Activated CD4-positive, alpha-beta memory T cell treated with anti-CD3 and anti-CD28 coated beads, Interleukin-2, amount 10 ng/mL, durations not matched to agents 7 days and 5 days (primary cell): ENCODE measurements at regions of chr10 and their contacts with region 1.

Region 1: GRCh38 chr10:103888113-103888841 is 29.7 kb downstream of the STN1 start:
- DNase-seq: no peak
- H3K4me3 Mint-ChIP-seq: no peak overlapping the region
- H3K27ac Mint-ChIP-seq: peak overlapping the region; percentile 54
- H3K4me1 Mint-ChIP-seq: peaks cover 47% of the 10 kb centered on the region
- H3K27me3 Mint-ChIP-seq: no peaks in the 10 kb centered on the region

Region 2: DNA sequence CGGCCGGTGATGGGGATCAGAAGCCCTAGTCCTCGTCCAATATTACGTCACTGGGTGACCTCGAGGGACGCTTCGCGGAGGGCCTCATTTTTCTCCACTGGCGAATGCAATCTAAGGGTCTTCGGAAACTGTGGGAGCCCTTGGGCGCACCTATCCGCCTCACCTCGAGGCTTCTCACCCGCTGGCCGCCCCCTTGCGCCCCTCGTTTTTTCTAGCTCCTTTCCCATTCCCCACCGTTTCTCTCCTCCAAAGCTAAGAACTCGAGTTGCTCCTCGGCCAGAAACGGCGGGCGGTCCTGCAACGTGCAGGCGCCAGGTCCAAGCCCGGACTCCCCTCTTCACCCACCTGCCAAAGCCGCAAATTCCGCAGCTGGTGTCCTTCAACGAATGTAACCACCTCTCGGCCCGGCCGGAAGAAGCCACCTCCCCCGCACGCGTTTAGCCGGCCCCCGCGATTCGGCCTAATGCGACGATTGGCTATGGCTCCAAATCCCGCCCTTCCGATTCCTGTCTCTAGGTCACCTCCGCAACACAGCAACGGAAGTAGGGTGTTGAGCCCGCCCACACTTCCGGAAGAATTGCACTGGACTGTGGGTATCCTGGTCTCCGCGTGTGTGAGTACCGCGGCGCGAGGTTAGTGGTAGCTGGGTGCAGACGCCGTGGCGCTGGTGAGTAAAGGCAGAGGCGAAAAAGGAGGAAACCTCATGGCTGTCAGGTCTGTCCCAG is 492.1 kb before region 1 on chr10 and contains the starts of genes ATP5MK and PDCD11:
- CTCF ChIA-PET with region 1: no interaction called
- POLR2A ChIA-PET with region 1: no interaction called
- DNase-seq: peak; percentile 97
- H3K4me3 Mint-ChIP-seq: peak within 1 kb of the TSS; percentile 92
- H3K27ac Mint-ChIP-seq: peak within 1 kb of the TSS; percentile 83
- H3K4me1 Mint-ChIP-seq: peaks cover 54% of the 10 kb centered on the region
- H3K27me3 Mint-ChIP-seq: no peaks in the 10 kb centered on the region
- total RNA-seq, gene ATP5MK: 299 to 315 TPM
- total RNA-seq, gene PDCD11: 38.9 to 39.6 TPM

Region 3: GRCh38 chr10:103911021-103911459 is 22.8 kb after region 1 on chr10:
- CTCF ChIA-PET with region 1: interaction called, 30 read pairs
- POLR2A ChIA-PET with region 1: interaction called, 104 read pairs
- DNase-seq: peak; percentile 69
- H3K4me3 Mint-ChIP-seq: peak overlapping the region; percentile 65
- H3K27ac Mint-ChIP-seq: peak overlapping the region; percentile 98
- H3K4me1 Mint-ChIP-seq: peaks cover 76% of the 10 kb centered on the region
- H3K27me3 Mint-ChIP-seq: no peaks in the 10 kb centered on the region

Region 4: GRCh38 chr10:103918053-103918846 is 30.0 kb after region 1 on chr10 and contains the start of gene STN1:
- CTCF ChIA-PET with region 1: interaction called, 15 read pairs
- POLR2A ChIA-PET with region 1: interaction called, 104 read pairs
- DNase-seq: peak; percentile 97
- H3K4me3 Mint-ChIP-seq: peak within 1 kb of the TSS; percentile 91
- H3K27ac Mint-ChIP-seq: peak within 1 kb of the TSS; percentile 93
- H3K4me1 Mint-ChIP-seq: peaks cover 37% of the 10 kb centered on the region
- H3K27me3 Mint-ChIP-seq: no peaks in the 10 kb centered on the region
- total RNA-seq, gene STN1: 55.1 to 56.8 TPM

Region 5: DNA sequence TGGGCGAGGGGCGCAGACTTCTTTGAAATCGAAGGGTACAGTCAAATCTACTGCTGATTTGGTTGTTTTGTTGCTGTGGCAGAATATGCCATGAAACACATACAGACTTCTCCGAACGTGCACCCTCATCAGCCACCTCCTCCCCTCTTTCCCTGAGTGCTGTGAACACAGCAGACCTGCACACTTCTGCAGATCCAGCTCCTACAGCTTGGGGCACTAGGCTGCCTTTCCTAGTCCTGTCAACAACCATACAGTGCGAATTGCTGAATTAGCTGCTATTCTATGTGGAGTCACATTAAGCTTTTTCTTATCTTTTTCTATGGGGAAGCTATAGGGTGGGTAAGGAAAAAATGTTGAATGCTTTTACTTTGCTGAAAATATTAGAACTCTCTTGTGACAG is 139.9 kb after region 1 on chr10:
- CTCF ChIA-PET with region 1: interaction called, 10 read pairs
- POLR2A ChIA-PET with region 1: no interaction called
- DNase-seq: no peak
- H3K4me3 Mint-ChIP-seq: no peak overlapping the region
- H3K27ac Mint-ChIP-seq: no peak overlapping the region
- H3K4me1 Mint-ChIP-seq: peaks cover 4% of the 10 kb centered on the region
- H3K27me3 Mint-ChIP-seq: no peaks in the 10 kb centered on the region

Region 6: DNA sequence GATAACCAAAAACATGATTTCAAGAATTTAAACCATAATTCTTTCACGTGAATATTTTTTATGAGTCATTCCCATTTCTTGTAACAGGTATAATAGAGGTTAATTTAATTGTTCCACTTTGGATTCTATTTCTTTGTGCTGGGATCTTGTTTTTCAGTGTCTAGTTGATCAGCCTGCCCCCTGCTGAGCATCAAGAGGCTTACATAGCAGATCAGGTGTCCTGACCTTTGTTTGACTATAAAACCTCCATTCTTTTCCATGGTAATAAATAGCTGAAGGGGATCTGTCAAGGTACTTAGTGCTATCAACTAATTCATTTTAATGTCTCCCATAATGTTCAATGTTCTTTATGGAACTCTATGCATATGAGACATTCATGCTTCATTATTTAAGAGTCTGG is 192.5 kb after region 1 on chr10:
- CTCF ChIA-PET with region 1: interaction called, 29 read pairs
- POLR2A ChIA-PET with region 1: interaction called, 4 read pairs
- DNase-seq: no peak
- H3K4me3 Mint-ChIP-seq: no peak overlapping the region
- H3K27ac Mint-ChIP-seq: no peak overlapping the region
- H3K4me1 Mint-ChIP-seq: no peaks in the 10 kb centered on the region
- H3K27me3 Mint-ChIP-seq: no peaks in the 10 kb centered on the region